IMR-90 (cell line): ENCODE measurements at regions of chr1 and their contacts with region 1.

Region 1: DNA sequence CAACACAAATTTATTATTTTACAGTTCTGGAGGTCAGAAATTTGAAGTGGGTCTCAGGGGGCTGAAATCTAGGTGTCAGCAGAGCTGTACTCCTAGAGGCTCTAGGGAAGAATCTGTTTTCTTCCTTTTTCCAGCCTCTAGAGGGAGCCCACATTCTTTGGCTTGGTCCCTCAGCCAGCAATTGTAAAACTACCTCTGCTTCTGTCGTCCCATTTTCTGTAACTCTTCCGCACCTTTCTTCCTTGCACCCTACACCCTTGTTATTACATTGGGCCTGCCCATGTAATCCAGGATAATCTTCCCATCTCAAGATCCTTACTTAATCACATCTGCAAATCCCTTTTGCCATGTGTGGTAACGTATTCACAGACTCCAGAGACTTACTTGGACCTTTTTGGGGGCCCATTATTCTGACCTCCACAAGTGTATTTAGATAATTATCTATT is 24.8 kb upstream of the THEM4 start:
- DNase-seq: peak; percentile 60
- ATAC-seq: peak; percentile 96
- H3K4me3 ChIP-seq: no peak overlapping the region
- H3K27ac ChIP-seq: no peak overlapping the region
- H3K4me1 ChIP-seq: no peaks in the 10 kb centered on the region
- H3K27me3 ChIP-seq: peaks cover 7% of the 10 kb centered on the region
- CTCF ChIP-seq: peak; percentile 93
- POLR2A ChIP-seq: no peak
- RAD21 ChIP-seq: peak; percentile 96

Region 2: GRCh38 chr1:151968058-151968457 is 34.0 kb after region 1 on chr1:
- CTCF ChIA-PET with region 1: interaction called, 6 read pairs
- POLR2A ChIA-PET with region 1: no interaction called
- dilution Hi-C with region 1: no loop called
- in situ Hi-C with region 1: no loop called
- intact Hi-C with region 1: loop called (anchors 5 kb)
- DNase-seq: peak; percentile 41
- ATAC-seq: peak; percentile 77
- H3K4me3 ChIP-seq: no peak overlapping the region
- H3K27ac ChIP-seq: no peak overlapping the region
- H3K4me1 ChIP-seq: no peaks in the 10 kb centered on the region; the same call in 1 of the 2 replicates
- H3K27me3 ChIP-seq: no peaks in the 10 kb centered on the region
- CTCF ChIP-seq: peak; percentile 86
- POLR2A ChIP-seq: no peak
- RAD21 ChIP-seq: peak; percentile 87

Region 3: GRCh38 chr1:152013664-152014237 is 79.7 kb after region 1 on chr1:
- CTCF ChIA-PET with region 1: interaction called, 5 read pairs
- POLR2A ChIA-PET with region 1: interaction called, 3 read pairs
- dilution Hi-C with region 1: no loop called
- in situ Hi-C with region 1: no loop called
- intact Hi-C with region 1: loop called (anchors 1 kb)
- DNase-seq: peak; percentile 56
- ATAC-seq: peak; percentile 57
- H3K4me3 ChIP-seq: no peak overlapping the region
- H3K27ac ChIP-seq: no peak overlapping the region
- H3K4me1 ChIP-seq: no peaks in the 10 kb centered on the region
- H3K27me3 ChIP-seq: peaks cover 30% of the 10 kb centered on the region
- CTCF ChIP-seq: peak; percentile 60
- POLR2A ChIP-seq: no peak
- RAD21 ChIP-seq: peak; percentile 47

Region 4: GRCh38 chr1:152227310-152227928 is 293.3 kb after region 1 on chr1:
- CTCF ChIA-PET with region 1: no interaction called
- POLR2A ChIA-PET with region 1: no interaction called
- dilution Hi-C with region 1: no loop called
- in situ Hi-C with region 1: no loop called
- intact Hi-C with region 1: no loop called
- DNase-seq: peak; percentile 2
- ATAC-seq: peak; percentile 32; the same call in 1 of the 2 replicates
- H3K4me3 ChIP-seq: no peak overlapping the region
- H3K27ac ChIP-seq: no peak overlapping the region
- H3K4me1 ChIP-seq: no peaks in the 10 kb centered on the region
- H3K27me3 ChIP-seq: no peaks in the 10 kb centered on the region
- CTCF ChIP-seq: no peak
- POLR2A ChIP-seq: no peak
- RAD21 ChIP-seq: no peak